AG04450 (cell line): ENCODE measurements at regions of chr14 and their contacts with region 1.

Region 1: DNA sequence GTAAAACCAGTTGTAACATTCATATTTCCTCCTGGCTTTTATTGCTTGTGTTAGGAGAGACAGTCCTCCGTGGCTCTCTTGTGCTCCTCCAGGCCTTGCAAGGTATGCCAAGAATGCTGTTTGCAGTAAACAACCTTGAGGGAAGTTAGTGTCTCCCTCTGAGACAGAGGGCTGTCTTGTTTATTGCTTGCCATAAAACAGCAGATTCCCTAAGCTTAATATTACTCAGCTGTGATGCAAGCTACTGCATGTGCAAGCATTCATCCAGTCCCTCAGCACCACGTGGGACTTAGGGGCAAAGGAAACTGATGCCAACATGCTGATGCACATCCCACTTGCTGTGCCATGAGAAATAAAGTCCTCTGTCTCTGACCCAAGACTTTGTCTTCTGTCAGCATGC is 6.6 kb downstream of the POMT2 start:
- DNase-seq: peak; percentile 76
- H3K4me3 ChIP-seq: no peak overlapping the region
- H3K27ac ChIP-seq: peak overlapping the region; percentile 58
- H3K27me3 ChIP-seq: no peaks in the 10 kb centered on the region
- CTCF ChIP-seq: no peak

Region 2: GRCh38 chr14:77151918-77152588 is 162.0 kb before region 1 on chr14:
- CTCF ChIA-PET with region 1: interaction called, 73 read pairs
- POLR2A ChIA-PET with region 1: no interaction called
- DNase-seq: no peak
- H3K4me3 ChIP-seq: no peak overlapping the region
- H3K27ac ChIP-seq: no peak overlapping the region
- H3K27me3 ChIP-seq: peaks cover 20% of the 10 kb centered on the region
- CTCF ChIP-seq: peak; percentile 27; the same call in 1 of the 2 replicates

Region 3: DNA sequence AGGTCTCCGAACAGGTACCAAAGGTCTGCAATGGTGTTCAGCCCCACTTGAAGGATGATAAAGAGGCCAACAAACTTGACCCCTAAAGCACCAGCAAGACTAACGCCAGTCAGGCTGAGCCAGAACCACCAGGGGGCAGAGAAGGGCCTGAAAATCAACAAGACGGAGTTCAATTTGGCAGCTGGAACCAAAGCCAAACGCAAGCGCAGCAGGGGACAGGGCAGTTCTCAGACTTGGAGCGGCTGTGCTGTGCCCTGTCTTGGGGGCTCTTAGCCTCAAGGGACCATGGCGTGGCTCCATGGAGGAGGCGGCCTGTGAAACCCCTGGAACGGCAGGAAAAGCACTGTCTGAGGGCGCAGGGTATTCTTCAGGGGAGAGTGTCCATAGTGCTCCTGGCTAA is 12.9 kb before region 1 on chr14:
- CTCF ChIA-PET with region 1: interaction called, 305 read pairs
- POLR2A ChIA-PET with region 1: interaction called, 12 read pairs
- DNase-seq: peak; percentile 63
- H3K4me3 ChIP-seq: no peak overlapping the region
- H3K27ac ChIP-seq: no peak overlapping the region
- H3K27me3 ChIP-seq: no peaks in the 10 kb centered on the region
- CTCF ChIP-seq: peak; percentile 95

Region 4: DNA sequence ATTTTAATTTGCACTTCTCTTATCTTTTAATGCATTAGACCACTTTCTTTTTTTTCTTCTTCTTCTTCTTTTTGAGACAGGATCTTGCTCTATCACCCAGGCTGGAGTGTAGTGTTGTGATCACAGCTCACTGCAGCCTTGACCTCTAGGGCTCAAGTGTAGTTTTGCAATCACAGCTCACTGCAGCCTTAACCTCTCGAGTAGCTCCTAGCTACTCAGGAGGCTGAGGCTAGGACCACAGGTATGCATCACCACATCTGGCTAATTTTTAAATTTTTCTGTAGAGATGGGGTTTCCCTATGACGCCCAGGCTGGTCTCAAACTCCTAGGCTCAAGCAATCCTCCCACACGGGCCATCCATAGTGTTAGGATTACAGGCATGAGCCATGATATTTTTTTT is 50.1 kb after region 1 on chr14:
- CTCF ChIA-PET with region 1: interaction called, 10 read pairs
- POLR2A ChIA-PET with region 1: no interaction called
- DNase-seq: no peak
- H3K4me3 ChIP-seq: no peak overlapping the region
- H3K27ac ChIP-seq: no peak overlapping the region
- H3K27me3 ChIP-seq: peaks cover 2% of the 10 kb centered on the region
- CTCF ChIP-seq: no peak

Region 5: DNA sequence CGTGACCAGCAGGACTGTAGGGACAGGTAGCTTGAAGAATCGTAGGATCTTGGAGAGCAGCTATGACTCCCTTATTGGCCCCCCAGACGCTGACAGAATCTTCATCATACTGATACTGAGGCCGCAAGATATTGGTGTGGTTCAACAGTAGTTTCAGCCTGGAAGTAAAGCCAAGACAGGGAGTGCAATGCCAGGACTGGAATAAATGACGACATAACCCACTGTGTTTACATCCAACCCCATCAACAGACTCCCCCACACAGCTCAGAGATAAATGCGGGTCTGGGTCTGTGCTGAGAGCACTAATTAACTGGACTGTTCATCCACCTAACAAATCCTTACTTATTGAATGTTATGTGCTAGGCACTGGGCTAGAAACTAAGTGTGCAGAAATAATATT is 92.7 kb after region 1 on chr14:
- CTCF ChIA-PET with region 1: no interaction called
- POLR2A ChIA-PET with region 1: interaction called, 11 read pairs
- DNase-seq: no peak
- H3K4me3 ChIP-seq: no peak overlapping the region
- H3K27ac ChIP-seq: no peak overlapping the region
- H3K27me3 ChIP-seq: peaks cover 6% of the 10 kb centered on the region
- CTCF ChIP-seq: no peak

Region 6: GRCh38 chr14:77457522-77458290 is 143.7 kb after region 1 on chr14 and contains the starts of genes AHSA1 and VIPAS39:
- CTCF ChIA-PET with region 1: interaction called, 10 read pairs
- POLR2A ChIA-PET with region 1: no interaction called
- DNase-seq: peak; percentile 98
- H3K4me3 ChIP-seq: peak within 1 kb of the TSS; percentile 99
- H3K27ac ChIP-seq: peak within 1 kb of the TSS; percentile 93
- H3K27me3 ChIP-seq: no peaks in the 10 kb centered on the region
- CTCF ChIP-seq: no peak
- polyA plus RNA-seq, gene AHSA1: 121 and 145 TPM in 2 replicates
- polyA plus RNA-seq, gene VIPAS39: 35.1 and 42.2 TPM in 2 replicates